BJ (cell line): ENCODE measurements at regions of chr17 and their contacts with region 1.

Region 1: GRCh38 chr17:64291254-64291851 is 28.3 kb upstream of the TEX2 start:
- DNase-seq: no peak
- H3K4me3 ChIP-seq: no peak overlapping the region
- H3K27me3 ChIP-seq: no peaks in the 10 kb centered on the region
- CTCF ChIP-seq: no peak

Region 2: DNA sequence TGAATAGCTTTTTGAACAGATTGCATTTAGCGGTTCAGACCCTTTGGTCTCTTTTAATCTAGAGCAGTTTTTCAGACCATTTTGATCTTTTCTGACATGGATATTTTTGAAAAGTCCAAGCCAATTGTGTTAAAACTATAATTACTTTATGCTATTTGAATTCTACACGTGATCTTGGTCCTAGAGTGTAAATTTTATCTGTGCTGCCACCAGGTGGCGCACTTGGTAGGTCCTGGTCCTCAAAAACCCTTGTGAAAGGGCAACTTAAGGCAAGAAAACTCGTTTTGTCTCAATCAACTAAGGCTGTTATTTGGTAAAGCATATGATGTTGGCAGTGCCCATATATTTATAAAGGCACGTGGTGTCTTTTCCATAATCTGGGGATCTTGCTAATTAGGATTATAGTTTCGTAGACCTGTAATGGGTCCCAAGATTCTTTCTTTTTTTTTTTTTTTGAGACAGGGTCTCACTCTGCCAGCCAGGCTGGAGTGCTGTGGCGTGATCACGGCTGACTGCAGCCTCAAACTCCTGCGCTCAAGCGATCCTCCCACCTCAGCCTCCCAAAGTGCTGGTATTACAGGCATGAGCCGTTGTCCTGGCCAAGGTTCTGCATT is 15.6 kb after region 1 on chr17:
- CTCF ChIA-PET with region 1: interaction called, 11 read pairs
- POLR2A ChIA-PET with region 1: no interaction called
- DNase-seq: no peak
- H3K4me3 ChIP-seq: no peak overlapping the region
- H3K27me3 ChIP-seq: 0 out of 2 replicates have a peak, but pooled peaks cover 1% of the 10 kb centered on the region
- CTCF ChIP-seq: peak; percentile 83